HCT116 (cell line): ENCODE measurements at regions of chr1 and their contacts with region 1.

Region 1: DNA sequence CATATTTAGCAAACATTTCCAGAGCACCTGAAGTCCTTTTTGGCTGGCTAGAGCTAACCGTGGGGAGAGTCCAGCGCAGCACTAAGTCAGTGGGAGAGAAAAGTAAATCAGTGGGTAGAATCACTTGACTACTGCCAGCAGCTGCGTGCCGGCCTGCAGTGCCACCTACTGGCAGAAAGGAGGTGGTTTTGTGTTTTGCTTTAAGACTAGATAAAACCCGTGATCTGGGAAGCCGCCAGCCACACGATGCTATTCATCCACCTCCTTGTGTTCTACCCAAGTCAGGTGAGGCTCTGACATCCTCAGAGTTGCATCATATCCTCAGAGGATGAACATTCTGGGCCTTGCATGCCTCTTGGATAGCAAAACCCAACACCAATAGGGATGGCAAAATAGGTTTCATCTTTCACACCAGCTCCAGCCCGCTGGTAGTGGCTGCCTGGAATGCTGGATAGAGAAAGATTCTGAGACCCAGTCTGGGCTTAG is 14.1 kb upstream of the HEYL start:
- DNase-seq: peak; percentile 71
- ATAC-seq: peak; percentile 69
- H3K4me3 ChIP-seq: no peak overlapping the region
- H3K27ac ChIP-seq: no peak overlapping the region
- H3K4me1 ChIP-seq: peaks cover 0 to 19% of the 10 kb centered on the region in 2 experiments; a peak in 2 of 4 replicates
- H3K27me3 ChIP-seq: no peaks in the 10 kb centered on the region
- CTCF ChIP-seq: peak; percentile 84 to 91 (median 87)
- POLR2A ChIP-seq: no peak
- RAD21 ChIP-seq: peak; percentile 91

Region 2: DNA sequence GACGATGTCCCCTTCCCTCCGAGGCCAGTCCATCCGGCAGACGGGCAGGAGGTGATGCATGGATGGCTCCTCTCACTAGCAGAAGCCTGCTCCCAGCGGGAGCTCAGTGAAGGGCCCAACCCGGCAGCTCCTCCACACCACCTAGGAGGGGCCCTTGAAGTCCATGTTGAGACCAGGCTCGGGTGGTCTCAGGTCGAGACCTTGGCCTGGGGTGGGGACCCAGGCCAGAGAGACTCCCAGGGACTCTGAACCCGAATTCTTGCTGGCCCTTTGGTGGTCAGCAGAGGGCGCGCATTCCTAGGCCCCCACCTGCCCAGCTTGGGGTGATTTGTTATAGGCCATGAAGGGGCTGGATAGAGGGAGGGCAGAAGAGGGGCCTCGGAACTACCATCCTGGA is 19.0 kb after region 1 on chr1:
- CTCF ChIA-PET with region 1: interaction called, 38 read pairs
- POLR2A ChIA-PET with region 1: no interaction called
- RAD21 ChIA-PET with region 1: no interaction called
- intact Hi-C with region 1: no loop called
- DNase-seq: no peak
- ATAC-seq: peak; percentile 69
- H3K4me3 ChIP-seq: no peak overlapping the region
- H3K27ac ChIP-seq: no peak overlapping the region
- H3K4me1 ChIP-seq: peaks cover 0 to 9% of the 10 kb centered on the region in 2 experiments; a peak in 1 of 4 replicates
- H3K27me3 ChIP-seq: no peaks in the 10 kb centered on the region
- CTCF ChIP-seq: peak; percentile 13 to 39 (median 34); a peak in 5 of 6 replicates
- POLR2A ChIP-seq: no peak
- RAD21 ChIP-seq: no peak; the same call in 1 of the 2 replicates

Region 3: DNA sequence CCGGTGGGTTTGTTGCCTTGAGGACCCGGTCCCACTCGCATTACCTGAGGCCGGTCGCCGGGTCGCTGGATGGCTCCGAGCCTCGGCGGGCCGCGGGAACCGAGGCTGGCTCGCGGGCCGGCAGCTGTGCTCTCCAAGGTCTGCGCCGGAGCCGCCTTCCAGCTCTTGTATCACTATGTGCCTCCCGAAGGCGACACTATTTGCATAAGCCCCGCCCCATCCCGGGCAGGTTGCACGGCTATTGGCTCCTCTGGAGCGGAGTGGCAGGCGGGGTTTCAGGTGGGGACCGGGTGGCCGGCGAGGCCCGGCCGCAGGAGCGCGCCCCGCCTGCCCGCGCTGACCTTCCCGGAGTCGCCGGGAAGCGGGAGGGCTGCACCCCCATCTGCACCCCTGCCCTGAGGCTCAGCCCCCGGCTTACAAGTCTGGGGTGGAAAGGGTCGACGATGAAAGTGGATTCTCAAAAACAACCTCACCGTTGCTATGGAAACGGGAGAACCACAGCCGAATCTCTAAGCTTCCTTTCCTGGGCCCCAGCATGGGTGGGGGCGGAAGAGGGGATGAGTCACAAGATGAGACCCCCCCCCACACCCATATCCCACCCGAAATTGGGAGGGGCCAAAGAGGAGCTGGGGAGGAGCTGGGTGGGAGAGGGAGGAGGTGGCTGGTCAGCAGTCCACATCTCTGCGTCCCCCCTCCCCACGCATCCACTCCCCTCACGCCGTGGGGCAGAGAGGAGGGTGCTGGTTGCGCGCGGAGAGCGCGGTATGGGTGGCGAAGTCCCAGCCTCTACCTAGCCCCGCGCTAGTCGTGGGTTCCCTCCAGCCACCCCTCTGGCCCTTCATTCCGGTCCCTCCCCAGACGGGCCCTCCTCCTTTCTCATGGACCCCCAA is 37.9 kb after region 1 on chr1 and contains the start of gene HPCAL4:
- CTCF ChIA-PET with region 1: interaction called, 10 read pairs
- POLR2A ChIA-PET with region 1: no interaction called
- RAD21 ChIA-PET with region 1: interaction called in 1 of 2 experiments, 3 read pairs
- intact Hi-C with region 1: no loop called
- DNase-seq: peak; percentile 74
- ATAC-seq: peak; percentile 100
- H3K4me3 ChIP-seq: peak within 1 kb of the TSS; percentile 48 to 59
- H3K27ac ChIP-seq: no peak within 1 kb of the TSS; the same call in 1 of the 2 replicates
- H3K4me1 ChIP-seq: peaks cover 3 to 20% of the 10 kb centered on the region in 2 experiments; a peak in 2 of 4 replicates
- H3K27me3 ChIP-seq: 0 out of 2 replicates have a peak, but pooled peaks cover 4% of the 10 kb centered on the region
- CTCF ChIP-seq: no peak
- POLR2A ChIP-seq: no peak
- RAD21 ChIP-seq: no peak
- total RNA-seq, gene HPCAL4: 5.2 TPM

Region 4: DNA sequence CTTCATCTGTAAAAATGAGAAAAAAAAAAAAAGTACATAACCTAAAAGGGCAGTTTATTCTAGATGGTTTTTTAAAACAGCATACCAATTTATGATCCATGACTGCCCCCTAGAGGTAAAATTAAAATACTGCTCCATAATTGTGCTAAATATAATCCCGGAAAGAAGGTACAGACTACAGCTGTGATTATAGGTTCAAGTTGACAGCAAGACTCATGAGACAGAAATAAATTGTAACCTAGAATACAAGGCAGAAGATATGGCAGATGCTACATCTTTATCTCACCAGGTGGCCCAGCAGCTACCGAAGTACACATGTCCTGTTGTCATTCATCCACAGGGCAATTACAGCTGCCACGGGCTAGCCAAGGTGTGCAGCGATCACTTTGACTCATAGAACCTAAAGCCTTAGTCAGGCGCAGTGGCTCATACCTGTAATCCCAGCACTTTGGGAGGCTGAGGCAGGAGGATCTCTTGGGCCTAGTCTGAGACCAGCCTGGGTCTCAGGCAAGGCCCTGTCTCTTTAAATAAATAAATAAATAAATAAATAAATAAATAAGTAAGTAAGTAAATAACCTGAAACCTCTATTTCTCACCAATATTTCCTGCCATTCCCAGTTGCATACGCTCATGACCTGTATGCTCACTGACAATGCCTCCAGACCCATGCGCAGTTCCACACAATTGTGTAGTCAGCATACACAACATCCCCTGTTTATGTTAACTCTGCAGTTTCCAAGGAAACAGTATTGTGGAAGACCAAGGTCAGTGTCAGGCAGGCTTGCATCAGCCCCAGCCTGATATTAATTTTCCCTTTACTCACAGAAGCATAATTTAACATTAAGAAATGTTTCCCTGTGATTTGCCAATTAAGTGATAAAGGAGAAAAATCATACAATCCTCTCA is 66.8 kb after region 1 on chr1:
- CTCF ChIA-PET with region 1: interaction called, 9 read pairs
- POLR2A ChIA-PET with region 1: no interaction called
- RAD21 ChIA-PET with region 1: no interaction called
- intact Hi-C with region 1: loop called (anchors 5 kb)
- DNase-seq: peak; percentile 48
- ATAC-seq: peak; percentile 82
- H3K4me3 ChIP-seq: peak overlapping the region in 1 of 2 experiments; percentile 35; a peak in 1 of 4 replicates
- H3K27ac ChIP-seq: no peak overlapping the region
- H3K4me1 ChIP-seq: peaks cover 0 to 3% of the 10 kb centered on the region in 2 experiments; a peak in 1 of 4 replicates
- H3K27me3 ChIP-seq: peaks cover 4% of the 10 kb centered on the region; the same call in 1 of the 2 replicates
- CTCF ChIP-seq: peak; percentile 37 to 80 (median 70); a peak in 5 of 6 replicates
- POLR2A ChIP-seq: no peak
- RAD21 ChIP-seq: peak; percentile 85

Region 5: DNA sequence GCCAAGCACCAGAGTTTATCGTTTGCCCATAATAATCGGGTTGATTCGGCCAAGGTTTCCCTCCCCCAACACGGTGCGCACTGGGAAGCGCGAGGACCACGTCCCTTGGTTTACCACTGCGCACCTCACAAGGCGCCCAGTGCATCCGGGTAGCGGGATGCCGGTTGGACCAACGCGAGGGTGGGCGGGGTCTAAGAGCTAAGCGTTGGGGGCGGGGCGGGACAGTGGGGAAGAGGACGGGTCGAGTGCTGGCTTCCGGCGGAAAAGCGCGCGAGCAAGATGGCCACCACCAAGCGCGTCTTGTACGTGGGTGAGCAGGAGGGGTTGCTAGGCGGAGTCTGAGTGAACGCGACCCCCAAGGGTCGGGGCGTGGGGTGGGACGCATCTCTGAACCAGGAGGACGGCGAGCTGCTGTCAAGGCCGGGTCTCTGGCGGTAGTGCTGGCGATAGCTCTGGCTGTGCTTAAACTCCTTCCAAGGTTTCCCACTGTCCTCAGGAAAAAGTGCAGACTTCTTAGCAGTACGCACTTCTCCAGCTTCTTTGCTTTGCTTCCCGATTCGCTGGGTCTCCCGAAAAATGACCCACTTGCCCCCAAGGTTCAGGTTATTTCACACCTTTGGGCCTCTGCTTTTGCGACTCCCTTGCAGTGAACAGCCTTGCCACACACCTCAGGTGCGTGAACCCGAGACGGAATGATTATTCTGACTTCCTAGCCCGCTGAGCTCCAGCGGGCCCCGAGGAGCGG is 85.2 kb after region 1 on chr1 and contains the start of gene PPIE:
- CTCF ChIA-PET with region 1: interaction called, 11 read pairs
- POLR2A ChIA-PET with region 1: no interaction called
- RAD21 ChIA-PET with region 1: no interaction called
- intact Hi-C with region 1: no loop called
- DNase-seq: peak; percentile 91
- ATAC-seq: peak; percentile 99
- H3K4me3 ChIP-seq: peak within 1 kb of the TSS; percentile 95 to 98
- H3K27ac ChIP-seq: peak within 1 kb of the TSS; percentile 53
- H3K4me1 ChIP-seq: peaks cover 7 to 18% of the 10 kb centered on the region in 2 experiments; a peak in 3 of 4 replicates
- H3K27me3 ChIP-seq: no peaks in the 10 kb centered on the region
- CTCF ChIP-seq: no peak
- POLR2A ChIP-seq: peak; percentile 64
- RAD21 ChIP-seq: no peak
- total RNA-seq, gene PPIE: 73.8 TPM

Region 6: GRCh38 chr1:40132383-40133311 is 479.1 kb after region 1 on chr1:
- CTCF ChIA-PET with region 1: no interaction called
- POLR2A ChIA-PET with region 1: no interaction called
- RAD21 ChIA-PET with region 1: no interaction called
- intact Hi-C with region 1: no loop called
- DNase-seq: no peak
- ATAC-seq: no peak
- H3K4me3 ChIP-seq: no peak overlapping the region
- H3K27ac ChIP-seq: no peak overlapping the region
- H3K4me1 ChIP-seq: no peaks in the 10 kb centered on the region
- H3K27me3 ChIP-seq: no peaks in the 10 kb centered on the region
- CTCF ChIP-seq: no peak
- POLR2A ChIP-seq: no peak
- RAD21 ChIP-seq: no peak